Activated T-helper 1 cell treated with anti-CD3 and anti-CD28 coated beads, Interleukin-12 subunit alpha, Interleukin-12 subunit beta, Interleukin-2, Interleukin-4 antibody, amounts not matched to agents 30 ng/mL and 10 ng/mL and 1 ng/mL, durations not matched to agents 14 hours and 24 hours and 36 hours (primary cell): ENCODE measurements at regions of chr2 and their contacts with region 1.

Region 1: GRCh38 chr2:158456309-158457066 is at the starts of genes CCDC148 and PKP4:
- DNase-seq: peak; percentile 87
- H3K4me3 Mint-ChIP-seq: peak within 1 kb of the TSS; percentile 98
- H3K27ac Mint-ChIP-seq: peak within 1 kb of the TSS; percentile 92
- H3K4me1 Mint-ChIP-seq: peaks cover 23% of the 10 kb centered on the region
- H3K27me3 Mint-ChIP-seq: peaks cover 29% of the 10 kb centered on the region
- total RNA-seq, gene CCDC148: 0.36 TPM in 1 of 2 replicates, not detected in the other
- total RNA-seq, gene PKP4: 28.4 and 30.3 TPM in 2 replicates

Region 2: DNA sequence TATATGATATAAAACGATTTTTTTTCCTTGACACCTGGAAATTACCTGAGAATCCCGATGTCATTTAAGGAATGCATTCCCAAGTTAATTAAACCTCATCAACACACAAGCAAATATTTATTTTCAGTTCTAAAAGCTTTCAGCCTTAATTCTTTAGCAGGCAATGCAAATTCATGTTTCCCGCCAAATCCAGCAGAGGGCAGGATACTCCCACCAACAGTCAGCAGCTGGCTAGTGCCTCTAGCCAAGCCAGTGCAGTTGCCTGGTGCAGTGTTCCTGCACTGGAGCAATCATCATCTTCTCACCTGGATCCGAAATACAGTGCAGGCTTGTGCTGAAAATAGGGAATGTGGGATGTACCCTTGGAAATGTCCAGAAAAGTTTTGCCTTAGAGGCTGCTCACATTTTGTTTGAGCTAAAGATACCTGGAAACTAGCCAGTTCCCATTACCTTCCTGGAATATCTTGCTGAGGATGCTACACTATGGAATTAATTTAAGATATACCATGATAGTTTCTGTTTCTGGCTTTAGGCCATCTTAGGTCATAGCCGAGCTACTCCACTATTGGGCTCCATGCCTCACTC is 964.2 kb before region 1 on chr2:
- intact Hi-C with region 1: loop called (anchors 5 kb)
- DNase-seq: peak; percentile 63
- H3K4me3 Mint-ChIP-seq: no peak overlapping the region
- H3K27ac Mint-ChIP-seq: no peak overlapping the region
- H3K4me1 Mint-ChIP-seq: peaks cover 71% of the 10 kb centered on the region
- H3K27me3 Mint-ChIP-seq: no peaks in the 10 kb centered on the region

Region 3: GRCh38 chr2:157784169-157784822 is 672.2 kb before region 1 on chr2:
- intact Hi-C with region 1: loop called (anchors 2 kb)
- DNase-seq: no peak
- H3K4me3 Mint-ChIP-seq: peak overlapping the region; percentile 37
- H3K27ac Mint-ChIP-seq: peak overlapping the region; percentile 32
- H3K4me1 Mint-ChIP-seq: peaks cover 87% of the 10 kb centered on the region
- H3K27me3 Mint-ChIP-seq: no peaks in the 10 kb centered on the region

Region 4: DNA sequence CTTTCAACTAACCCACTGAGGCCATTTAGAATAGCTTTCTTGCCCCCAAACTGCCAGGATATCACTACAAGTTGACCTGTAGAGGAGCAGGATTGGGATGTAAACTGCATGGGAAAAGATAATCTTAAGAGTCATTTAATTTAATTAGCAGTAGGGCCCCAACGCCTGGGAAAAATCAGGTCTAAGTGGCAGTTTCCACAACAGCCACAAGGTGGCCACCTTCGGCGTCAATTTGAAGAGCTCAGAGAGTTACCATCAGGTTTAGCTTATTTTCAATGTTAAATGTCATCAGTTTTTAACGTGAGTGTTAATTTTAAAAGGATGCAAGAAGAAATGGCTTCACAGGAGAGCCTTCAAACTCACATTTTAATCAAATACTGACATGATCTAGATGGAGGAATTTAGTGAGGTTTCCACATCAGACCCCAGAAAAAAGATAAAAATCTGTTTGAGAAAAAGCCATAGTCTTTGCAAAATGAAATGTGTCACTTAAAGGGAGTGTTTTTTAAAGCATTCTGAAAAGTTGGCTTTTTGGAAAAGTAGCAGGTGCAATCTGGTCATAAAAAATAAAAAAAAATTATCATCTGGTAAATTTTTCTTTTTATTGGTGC is 432.1 kb before region 1 on chr2:
- intact Hi-C with region 1: loop called (anchors 2 kb)
- DNase-seq: peak; percentile 34
- H3K4me3 Mint-ChIP-seq: no peak overlapping the region
- H3K27ac Mint-ChIP-seq: no peak overlapping the region
- H3K4me1 Mint-ChIP-seq: peaks cover 14% of the 10 kb centered on the region
- H3K27me3 Mint-ChIP-seq: peaks cover 11% of the 10 kb centered on the region

Region 5: GRCh38 chr2:158507166-158507565 is 50.7 kb after region 1 on chr2:
- intact Hi-C with region 1: loop called (anchors 2 kb)
- DNase-seq: no peak
- H3K4me3 Mint-ChIP-seq: no peak overlapping the region
- H3K27ac Mint-ChIP-seq: no peak overlapping the region
- H3K4me1 Mint-ChIP-seq: peaks cover 9% of the 10 kb centered on the region
- H3K27me3 Mint-ChIP-seq: no peaks in the 10 kb centered on the region

Region 6: DNA sequence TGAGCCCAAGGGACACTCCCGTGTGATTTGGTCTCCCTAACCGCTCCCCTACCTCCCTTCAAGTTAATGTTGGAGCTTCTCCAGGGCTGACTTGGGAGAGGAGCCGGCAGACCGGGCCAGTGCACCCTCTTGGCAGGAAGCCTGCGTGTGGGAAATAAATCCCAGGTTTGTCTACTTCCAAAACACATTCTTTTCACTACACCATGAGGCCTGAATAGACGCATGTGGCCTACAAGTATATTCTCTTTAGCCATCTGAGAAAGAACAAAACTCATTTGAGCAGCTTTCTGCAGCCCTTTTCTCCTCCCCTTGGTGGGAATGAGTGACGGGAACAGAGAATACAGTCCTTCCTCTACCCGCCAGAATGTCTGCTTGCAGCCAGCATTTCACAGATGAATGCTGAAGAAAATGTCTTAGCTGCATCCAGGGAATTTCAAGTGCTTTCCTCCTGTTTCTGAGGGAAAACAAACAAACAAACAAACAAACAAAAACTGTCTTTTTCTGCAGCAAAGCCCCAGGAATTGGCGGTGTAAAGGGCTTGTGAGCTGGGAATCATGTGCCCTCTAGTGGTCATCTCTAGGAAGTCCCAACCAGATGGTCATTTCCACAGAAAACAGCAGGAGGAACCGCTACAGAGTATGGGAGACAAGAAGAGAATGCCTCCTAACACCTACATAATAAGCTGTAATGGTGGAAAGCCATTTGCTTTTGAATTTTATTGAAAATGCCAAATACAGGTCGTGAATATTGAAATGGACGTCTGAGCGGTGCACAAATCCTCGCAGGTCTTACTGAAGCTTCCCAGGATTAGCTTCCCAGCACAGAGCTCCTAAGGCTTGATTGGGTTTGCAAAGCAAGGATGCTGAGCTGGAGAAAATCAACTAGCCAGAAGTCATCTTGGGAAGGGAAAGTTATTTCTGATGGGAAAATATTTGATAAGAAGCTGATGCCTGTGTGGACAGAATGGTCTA is 297.4 kb after region 1 on chr2:
- intact Hi-C with region 1: loop called (anchors 5 kb)
- DNase-seq: peak; percentile 15
- H3K4me3 Mint-ChIP-seq: no peak overlapping the region
- H3K27ac Mint-ChIP-seq: no peak overlapping the region
- H3K4me1 Mint-ChIP-seq: no peaks in the 10 kb centered on the region
- H3K27me3 Mint-ChIP-seq: peaks cover 3% of the 10 kb centered on the region

Region 7: DNA sequence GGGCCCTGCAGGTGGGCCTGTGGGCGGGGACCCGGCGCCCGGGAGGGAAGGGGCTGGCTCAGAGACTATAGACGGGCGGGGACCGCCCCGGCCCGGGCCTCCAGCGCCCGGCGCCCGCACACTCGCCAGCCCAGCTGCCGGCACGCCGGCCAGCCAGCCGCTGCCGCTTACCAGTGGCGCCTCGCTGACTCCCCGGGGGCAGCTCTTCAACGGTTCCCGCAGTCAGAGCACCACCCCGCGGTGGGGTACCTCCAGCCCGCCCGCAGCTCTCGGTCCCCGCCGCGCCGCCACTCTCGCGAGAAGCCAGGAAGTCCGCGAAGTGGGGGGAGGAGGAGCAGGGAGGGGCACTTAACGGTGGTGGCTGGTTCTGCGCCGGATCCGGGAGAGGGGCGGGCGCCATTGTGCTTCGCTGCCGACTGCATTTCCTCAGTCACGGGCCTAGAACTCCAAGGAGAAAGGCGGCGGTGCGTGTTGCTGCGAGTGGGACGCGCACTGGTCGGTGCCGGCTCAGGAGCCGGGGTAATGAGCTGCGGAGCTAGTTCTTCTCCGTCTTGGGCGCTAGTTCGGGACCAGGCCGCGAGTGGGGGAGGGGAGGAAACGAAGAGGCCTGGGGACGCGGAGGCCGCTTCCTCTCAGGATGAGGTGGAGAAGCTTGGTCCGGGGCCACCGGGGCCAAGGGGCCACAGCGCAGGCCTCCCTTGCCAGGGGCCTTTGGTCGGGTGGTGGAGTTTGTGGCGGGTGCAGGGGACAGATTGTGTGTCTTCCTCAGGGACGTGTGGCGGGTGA is 1255.8 kb after region 1 on chr2 and contains the start of gene MARCHF7:
- intact Hi-C with region 1: loop called (anchors 5 kb)
- DNase-seq: peak; percentile 96
- H3K4me3 Mint-ChIP-seq: peak within 1 kb of the TSS; percentile 98
- H3K27ac Mint-ChIP-seq: peak within 1 kb of the TSS; percentile 98
- H3K4me1 Mint-ChIP-seq: peaks cover 44% of the 10 kb centered on the region
- H3K27me3 Mint-ChIP-seq: no peaks in the 10 kb centered on the region
- total RNA-seq, gene MARCHF7: 76.5 and 80.3 TPM in 2 replicates